GM12878 (cell line): ENCODE measurements at regions of chr17 and their contacts with region 1.

Region 1: DNA sequence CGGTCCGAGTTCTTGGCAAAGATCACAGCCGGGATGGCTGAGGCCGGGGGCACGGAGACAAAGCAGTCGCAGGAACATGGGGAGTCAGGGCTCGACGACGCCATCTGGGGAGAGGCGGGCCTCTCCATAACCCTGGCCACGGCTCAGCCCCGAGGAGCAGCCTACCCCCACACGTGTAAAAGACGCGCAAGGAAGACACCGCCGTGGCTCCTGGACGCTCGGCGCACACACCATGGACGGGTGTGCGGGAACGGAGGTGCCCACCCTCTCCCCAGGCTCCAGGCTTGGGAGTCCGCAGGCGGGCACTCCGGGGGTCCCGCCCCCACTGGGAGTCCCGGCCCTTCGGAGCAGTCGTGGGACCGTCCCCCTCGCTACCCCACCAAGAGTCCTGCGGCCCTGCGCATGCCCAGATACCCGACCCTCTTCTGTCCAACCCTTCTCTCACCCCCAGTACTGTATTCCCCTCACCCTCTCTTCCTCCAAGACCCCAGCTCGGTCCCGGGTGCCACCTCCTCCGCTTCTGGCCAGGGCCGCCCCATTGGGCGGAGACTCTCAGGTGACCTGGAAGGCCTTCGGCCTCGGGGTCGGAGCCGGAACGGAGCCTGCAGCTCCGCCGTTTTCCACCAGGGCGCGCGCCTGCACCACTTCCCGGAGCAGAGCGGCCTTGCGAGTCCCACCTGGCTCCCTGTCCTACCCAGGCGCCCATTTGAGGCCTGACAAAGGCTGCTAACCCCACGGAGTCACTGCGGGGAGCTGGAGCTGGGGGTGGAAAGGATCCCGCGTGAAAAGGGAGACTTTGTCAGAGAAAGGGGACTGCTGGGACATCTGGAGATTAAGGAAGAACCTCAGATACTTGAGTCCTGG is at the start of gene SCRN2:
- DNase-seq: peak; percentile 60
- ATAC-seq: peak; percentile 94
- H3K4me3 ChIP-seq: peak within 1 kb of the TSS; percentile 74
- H3K27ac ChIP-seq: peak within 1 kb of the TSS; percentile 17; the same call in 1 of the 2 replicates
- H3K4me1 ChIP-seq: peaks cover 22% of the 10 kb centered on the region
- H3K27me3 ChIP-seq: peaks cover 0 to 1% of the 10 kb centered on the region in 2 experiments; a peak in 2 of 4 replicates
- CTCF ChIP-seq: peak; percentile 93 to 98 (median 97)
- EP300 ChIP-seq: no peak
- POLR2A ChIP-seq: peak; percentile 65; the same call in 1 of the 2 replicates
- RAD21 ChIP-seq: peak; percentile 85
- polyA plus RNA-seq, gene SCRN2: 0.34 to 1.9 TPM

Region 2: GRCh38 chr17:47821424-47822391 is 19.3 kb before region 1 on chr17 and contains the start of gene OSBPL7:
- CTCF ChIA-PET with region 1: interaction called, 11 read pairs
- POLR2A ChIA-PET with region 1: interaction called, 5 read pairs
- RAD21 ChIA-PET with region 1: interaction called, 3 read pairs
- SMC1A ChIA-PET with region 1: interaction called, 3 read pairs
- in situ Hi-C with region 1: no loop called
- intact Hi-C with region 1: no loop called
- DNase-seq: peak; percentile 38
- ATAC-seq: peak; percentile 98
- H3K4me3 ChIP-seq: peak within 1 kb of the TSS; percentile 93
- H3K27ac ChIP-seq: peak within 1 kb of the TSS; percentile 32
- H3K4me1 ChIP-seq: peaks cover 10% of the 10 kb centered on the region
- H3K27me3 ChIP-seq: no peaks in the 10 kb centered on the region
- CTCF ChIP-seq: peak; percentile 21 to 77 (median 35); a peak in 4 of 6 replicates
- EP300 ChIP-seq: no peak
- POLR2A ChIP-seq: peak; percentile 91
- RAD21 ChIP-seq: no peak
- polyA plus RNA-seq, gene OSBPL7: 0.50 to 0.82 TPM

Region 3: DNA sequence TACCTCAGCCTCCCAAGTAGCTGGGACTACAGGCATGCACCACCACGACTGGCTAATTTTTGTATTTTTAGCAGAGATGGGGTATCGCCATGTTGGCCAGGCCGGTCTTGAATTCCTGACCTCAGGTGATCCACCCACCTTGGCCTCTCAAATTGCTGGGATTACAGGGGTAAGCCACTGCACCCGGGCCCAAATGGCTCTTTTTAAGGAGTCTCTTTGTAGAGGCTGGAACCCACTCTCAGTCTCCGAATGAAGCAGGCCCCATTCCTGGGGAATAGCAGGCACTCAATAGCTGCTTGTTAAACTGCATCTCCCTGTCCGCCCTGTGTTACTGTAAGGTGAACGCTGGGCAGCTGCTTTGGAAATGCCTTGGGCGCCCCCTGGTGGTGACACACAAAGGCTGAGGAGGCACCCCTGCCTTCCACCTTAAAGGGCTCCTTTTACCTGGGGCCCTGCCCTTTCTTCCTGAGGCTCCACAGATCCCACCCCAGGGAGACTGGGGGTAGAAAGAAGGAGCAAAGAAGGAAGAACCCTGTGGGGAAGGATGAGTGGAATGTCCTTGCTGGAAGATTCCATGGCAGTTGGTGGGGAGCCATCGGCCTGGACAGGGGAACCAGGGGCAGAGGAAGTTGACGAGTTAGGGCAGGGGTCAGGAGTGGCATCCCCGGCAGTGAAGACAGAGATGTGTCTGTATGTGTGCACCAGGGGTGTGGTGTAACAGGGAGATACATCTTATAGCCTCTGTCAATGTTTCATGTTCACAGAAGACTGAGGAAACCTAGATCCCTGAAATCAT is 49.0 kb after region 1 on chr17:
- CTCF ChIA-PET with region 1: interaction called, 502 read pairs
- POLR2A ChIA-PET with region 1: interaction called, 12 read pairs
- RAD21 ChIA-PET with region 1: interaction called, 206 read pairs
- SMC1A ChIA-PET with region 1: interaction called, 231 read pairs
- in situ Hi-C with region 1: loop called (anchors 5 kb)
- intact Hi-C with region 1: loop called (anchors 1 kb)
- DNase-seq: no peak
- ATAC-seq: peak; percentile 99
- H3K4me3 ChIP-seq: no peak overlapping the region
- H3K27ac ChIP-seq: no peak overlapping the region
- H3K4me1 ChIP-seq: peaks cover 12% of the 10 kb centered on the region
- H3K27me3 ChIP-seq: no peaks in the 10 kb centered on the region
- CTCF ChIP-seq: peak; percentile 91 to 97 (median 96)
- EP300 ChIP-seq: no peak
- POLR2A ChIP-seq: no peak
- RAD21 ChIP-seq: peak; percentile 96

Region 4: DNA sequence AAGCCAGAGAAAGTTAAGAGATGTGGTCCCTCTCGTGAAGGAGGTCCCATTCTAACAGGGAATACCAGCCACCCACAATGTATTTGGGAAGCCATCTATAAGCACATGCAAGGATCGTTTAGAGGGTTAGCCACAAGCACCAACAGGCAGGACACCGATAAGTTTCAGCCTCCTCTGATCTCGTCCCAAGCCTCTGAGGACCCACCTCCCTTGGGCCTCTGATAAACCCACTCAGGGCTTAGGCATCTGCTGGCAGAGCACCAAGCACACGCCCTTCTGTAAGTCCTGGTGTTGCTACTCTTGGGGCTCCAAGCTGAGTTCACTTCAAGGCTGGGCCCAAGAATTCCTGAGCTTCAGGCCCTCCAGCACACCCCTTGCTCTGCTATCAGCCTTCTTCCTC is 95.0 kb after region 1 on chr17:
- CTCF ChIA-PET with region 1: interaction called, 14 read pairs
- POLR2A ChIA-PET with region 1: interaction called, 5 read pairs
- RAD21 ChIA-PET with region 1: interaction called, 8 read pairs
- SMC1A ChIA-PET with region 1: interaction called, 16 read pairs
- in situ Hi-C with region 1: no loop called
- intact Hi-C with region 1: loop called (anchors 2 kb)
- DNase-seq: no peak
- ATAC-seq: no peak
- H3K4me3 ChIP-seq: no peak overlapping the region
- H3K27ac ChIP-seq: no peak overlapping the region
- H3K4me1 ChIP-seq: peaks cover 25% of the 10 kb centered on the region
- H3K27me3 ChIP-seq: no peaks in the 10 kb centered on the region
- CTCF ChIP-seq: no peak
- EP300 ChIP-seq: no peak
- POLR2A ChIP-seq: no peak
- RAD21 ChIP-seq: no peak

Region 5: DNA sequence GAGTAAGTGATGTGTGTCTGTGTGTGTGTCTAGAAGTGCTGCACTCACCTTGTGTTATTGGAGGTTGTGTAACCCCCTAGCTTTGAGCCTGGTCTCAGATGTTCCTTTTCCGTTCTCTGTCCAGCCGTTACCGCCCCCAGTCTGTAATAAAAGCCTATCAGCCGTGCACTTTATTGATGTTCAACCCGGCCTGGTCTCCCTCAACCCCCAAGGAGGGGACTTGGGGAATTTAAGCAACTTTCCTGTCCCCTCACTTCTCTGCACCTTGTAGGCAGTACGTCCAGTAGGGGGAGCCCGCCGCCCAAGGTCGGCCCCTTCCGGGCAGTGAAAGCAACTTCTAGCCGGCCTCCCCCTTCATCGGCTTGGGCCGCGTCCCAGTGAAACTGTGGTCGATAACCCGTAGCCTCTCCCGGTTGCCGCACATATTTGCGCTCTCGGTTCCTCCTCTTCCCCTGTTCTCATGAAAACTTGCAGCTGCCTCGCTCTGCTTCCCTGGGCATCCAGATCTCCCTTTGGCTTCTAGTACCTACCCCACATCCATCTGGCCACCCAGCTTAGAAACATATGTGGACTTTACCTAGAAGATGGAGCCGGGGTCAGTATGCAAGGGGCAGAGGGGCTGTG is 108.3 kb after region 1 on chr17:
- CTCF ChIA-PET with region 1: interaction called, 45 read pairs
- POLR2A ChIA-PET with region 1: interaction called, 4 read pairs
- RAD21 ChIA-PET with region 1: interaction called, 18 read pairs
- SMC1A ChIA-PET with region 1: interaction called, 47 read pairs
- in situ Hi-C with region 1: no loop called
- intact Hi-C with region 1: no loop called
- DNase-seq: peak; percentile 53
- ATAC-seq: peak; percentile 92
- H3K4me3 ChIP-seq: peak overlapping the region; percentile 41; the same call in 1 of the 2 replicates
- H3K27ac ChIP-seq: peak overlapping the region; percentile 74
- H3K4me1 ChIP-seq: peaks cover 44% of the 10 kb centered on the region
- H3K27me3 ChIP-seq: no peaks in the 10 kb centered on the region
- CTCF ChIP-seq: peak; percentile 91 to 94 (median 94)
- EP300 ChIP-seq: peak in 1 of 2 experiments; percentile 45; a peak in 1 of 4 replicates
- POLR2A ChIP-seq: no peak
- RAD21 ChIP-seq: peak; percentile 86

Region 6: DNA sequence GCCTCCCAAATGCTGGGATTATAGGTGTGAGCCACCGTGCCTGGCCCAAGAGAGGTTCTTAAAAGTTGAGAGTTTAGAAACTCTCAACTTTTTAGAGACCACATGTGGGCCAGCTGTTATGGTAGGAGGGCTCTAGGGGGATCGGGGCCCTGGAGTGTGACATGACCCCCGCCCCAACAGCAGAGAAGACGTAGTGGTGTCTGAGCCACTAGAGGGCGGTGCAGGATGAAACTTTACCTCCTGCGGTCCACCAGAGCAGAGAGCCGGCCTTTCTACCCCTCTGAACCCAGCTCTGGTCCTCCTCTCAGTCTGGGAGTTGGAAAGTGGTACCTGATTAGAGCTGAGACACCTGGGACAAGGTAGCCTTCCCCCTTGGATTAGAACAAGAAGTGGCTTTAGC is 137.4 kb after region 1 on chr17:
- CTCF ChIA-PET with region 1: interaction called, 11 read pairs
- POLR2A ChIA-PET with region 1: no interaction called
- RAD21 ChIA-PET with region 1: interaction called, 4 read pairs
- SMC1A ChIA-PET with region 1: interaction called, 4 read pairs
- in situ Hi-C with region 1: no loop called
- intact Hi-C with region 1: no loop called
- DNase-seq: no peak
- ATAC-seq: peak; percentile 98
- H3K4me3 ChIP-seq: no peak overlapping the region
- H3K27ac ChIP-seq: no peak overlapping the region
- H3K4me1 ChIP-seq: no peaks in the 10 kb centered on the region; the same call in 1 of the 2 replicates
- H3K27me3 ChIP-seq: no peaks in the 10 kb centered on the region
- CTCF ChIP-seq: peak; percentile 73 to 86 (median 77)
- EP300 ChIP-seq: no peak
- POLR2A ChIP-seq: no peak
- RAD21 ChIP-seq: peak; percentile 86

Region 7: GRCh38 chr17:48011405-48012150 is 170.6 kb after region 1 on chr17:
- CTCF ChIA-PET with region 1: interaction called, 82 read pairs
- POLR2A ChIA-PET with region 1: no interaction called
- RAD21 ChIA-PET with region 1: interaction called, 5 read pairs
- SMC1A ChIA-PET with region 1: interaction called, 30 read pairs
- in situ Hi-C with region 1: loop called (anchors 5 kb)
- intact Hi-C with region 1: no loop called
- DNase-seq: no peak
- ATAC-seq: peak; percentile 92
- H3K4me3 ChIP-seq: peak overlapping the region; percentile 75
- H3K27ac ChIP-seq: no peak overlapping the region
- H3K4me1 ChIP-seq: peaks cover 7% of the 10 kb centered on the region
- H3K27me3 ChIP-seq: no peaks in the 10 kb centered on the region
- CTCF ChIP-seq: peak; percentile 61 to 76 (median 72)
- EP300 ChIP-seq: no peak
- POLR2A ChIP-seq: no peak
- RAD21 ChIP-seq: peak; percentile 52; the same call in 1 of the 2 replicates

Region 8: GRCh38 chr17:48074315-48075081 is 233.5 kb after region 1 on chr17:
- CTCF ChIA-PET with region 1: no interaction called
- POLR2A ChIA-PET with region 1: no interaction called
- RAD21 ChIA-PET with region 1: no interaction called
- SMC1A ChIA-PET with region 1: no interaction called
- in situ Hi-C with region 1: no loop called
- intact Hi-C with region 1: no loop called
- DNase-seq: no peak
- ATAC-seq: peak; percentile 84
- H3K4me3 ChIP-seq: no peak overlapping the region
- H3K27ac ChIP-seq: no peak overlapping the region
- H3K4me1 ChIP-seq: no peaks in the 10 kb centered on the region
- H3K27me3 ChIP-seq: no peaks in the 10 kb centered on the region
- CTCF ChIP-seq: peak; percentile 75 to 91 (median 79)
- EP300 ChIP-seq: no peak
- POLR2A ChIP-seq: no peak
- RAD21 ChIP-seq: peak; percentile 86